Activated CD4-positive, alpha-beta memory T cell treated with anti-CD3 and anti-CD28 coated beads, Interleukin-2, amount 10 ng/mL, durations not matched to agents 7 days and 5 days (primary cell): ENCODE measurements at regions of chr1 and their contacts with region 1.

Region 1: DNA sequence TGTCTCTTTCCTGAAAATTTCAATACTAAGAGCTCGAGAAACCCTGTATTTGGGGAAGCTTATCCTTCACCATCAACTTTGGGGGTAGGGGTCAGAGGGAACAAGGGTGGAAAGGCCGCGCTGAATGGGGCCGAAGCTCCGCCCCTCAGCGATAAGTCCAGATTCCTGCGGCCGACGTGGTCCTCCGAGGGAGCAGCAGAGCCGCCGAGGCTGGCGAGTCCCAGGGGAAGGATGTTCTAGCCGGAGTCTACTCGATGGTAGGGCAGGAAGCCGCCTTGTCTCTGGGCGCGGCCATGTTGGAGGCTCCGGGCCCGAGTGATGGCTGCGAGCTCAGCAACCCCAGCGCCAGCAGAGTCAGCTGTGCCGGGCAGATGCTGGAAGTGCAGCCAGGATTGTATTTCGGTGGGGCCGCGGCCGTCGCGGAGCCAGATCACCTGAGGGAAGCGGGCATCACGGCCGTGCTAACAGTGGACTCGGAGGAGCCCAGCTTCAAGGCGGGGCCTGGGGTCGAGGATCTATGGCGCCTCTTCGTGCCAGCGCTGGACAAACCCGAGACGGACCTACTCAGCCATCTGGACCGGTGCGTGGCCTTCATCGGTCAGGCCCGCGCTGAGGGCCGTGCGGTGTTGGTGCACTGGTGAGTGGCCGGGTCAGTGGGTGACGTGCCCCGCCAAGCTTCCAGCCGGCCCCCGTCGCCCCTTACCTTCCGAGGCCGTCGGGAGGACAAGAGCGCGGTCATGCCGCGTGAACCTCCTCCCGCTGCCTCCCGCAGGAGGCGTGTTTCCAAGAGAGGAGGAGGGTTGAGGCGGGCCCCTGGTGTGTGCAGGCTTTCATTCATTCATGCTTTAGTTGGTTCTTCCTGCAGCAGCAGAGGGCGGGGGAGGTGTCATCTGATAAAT is at the start of gene DUSP12:
- DNase-seq: peak; percentile 89
- H3K4me3 Mint-ChIP-seq: peak within 1 kb of the TSS; percentile 98
- H3K27ac Mint-ChIP-seq: peak within 1 kb of the TSS; percentile 97
- H3K4me1 Mint-ChIP-seq: peaks cover 51% of the 10 kb centered on the region
- H3K27me3 Mint-ChIP-seq: peaks cover 8% of the 10 kb centered on the region
- total RNA-seq, gene DUSP12: 23.4 to 23.5 TPM

Region 2: DNA sequence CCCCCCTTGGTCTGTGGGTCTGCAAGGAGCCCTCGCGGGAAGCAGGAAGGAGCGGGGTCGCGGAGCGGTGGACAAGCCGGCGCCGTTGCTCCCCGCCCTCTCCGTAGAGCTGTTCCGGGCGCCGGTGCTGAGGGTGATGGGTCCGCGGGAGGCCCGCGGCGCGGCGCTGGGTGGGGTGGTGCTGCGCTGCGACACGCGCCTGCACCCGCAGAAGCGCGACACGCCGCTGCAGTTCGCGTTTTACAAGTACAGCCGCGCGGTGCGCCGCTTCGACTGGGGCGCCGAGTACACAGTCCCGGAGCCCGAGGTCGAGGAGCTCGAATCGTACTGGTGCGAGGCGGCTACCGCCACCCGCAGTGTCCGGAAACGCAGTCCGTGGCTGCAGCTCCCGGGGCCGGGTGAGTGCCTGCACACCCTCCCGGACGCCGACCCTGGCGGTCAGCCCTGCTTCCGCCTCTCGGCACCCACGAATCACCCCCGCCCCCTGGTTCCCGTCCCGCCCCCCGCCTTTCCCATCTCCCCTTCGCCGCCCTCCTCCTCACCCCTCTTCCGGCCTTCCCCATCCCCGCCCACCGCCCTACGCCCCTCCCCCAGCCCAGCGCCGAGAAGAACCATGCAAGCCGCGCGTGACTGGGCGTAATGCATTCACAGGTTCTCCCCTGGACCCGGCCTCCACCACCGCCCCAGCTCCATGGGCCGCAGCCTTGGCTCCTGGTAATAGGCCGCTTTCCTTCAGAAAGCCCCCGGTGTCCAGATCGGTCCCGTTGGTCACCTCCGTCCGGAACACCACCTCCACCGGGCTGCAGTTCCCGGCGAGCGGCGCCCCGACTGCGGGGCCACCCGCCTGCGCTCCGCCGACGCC is 22.9 kb before region 1 on chr1:
- CTCF ChIA-PET with region 1: interaction called, 8 read pairs
- POLR2A ChIA-PET with region 1: interaction called, 23 read pairs
- DNase-seq: peak; percentile 74
- H3K4me3 Mint-ChIP-seq: peak overlapping the region; percentile 78
- H3K27ac Mint-ChIP-seq: peak overlapping the region; percentile 44
- H3K4me1 Mint-ChIP-seq: peaks cover 58% of the 10 kb centered on the region
- H3K27me3 Mint-ChIP-seq: peaks cover 66% of the 10 kb centered on the region

Region 3: DNA sequence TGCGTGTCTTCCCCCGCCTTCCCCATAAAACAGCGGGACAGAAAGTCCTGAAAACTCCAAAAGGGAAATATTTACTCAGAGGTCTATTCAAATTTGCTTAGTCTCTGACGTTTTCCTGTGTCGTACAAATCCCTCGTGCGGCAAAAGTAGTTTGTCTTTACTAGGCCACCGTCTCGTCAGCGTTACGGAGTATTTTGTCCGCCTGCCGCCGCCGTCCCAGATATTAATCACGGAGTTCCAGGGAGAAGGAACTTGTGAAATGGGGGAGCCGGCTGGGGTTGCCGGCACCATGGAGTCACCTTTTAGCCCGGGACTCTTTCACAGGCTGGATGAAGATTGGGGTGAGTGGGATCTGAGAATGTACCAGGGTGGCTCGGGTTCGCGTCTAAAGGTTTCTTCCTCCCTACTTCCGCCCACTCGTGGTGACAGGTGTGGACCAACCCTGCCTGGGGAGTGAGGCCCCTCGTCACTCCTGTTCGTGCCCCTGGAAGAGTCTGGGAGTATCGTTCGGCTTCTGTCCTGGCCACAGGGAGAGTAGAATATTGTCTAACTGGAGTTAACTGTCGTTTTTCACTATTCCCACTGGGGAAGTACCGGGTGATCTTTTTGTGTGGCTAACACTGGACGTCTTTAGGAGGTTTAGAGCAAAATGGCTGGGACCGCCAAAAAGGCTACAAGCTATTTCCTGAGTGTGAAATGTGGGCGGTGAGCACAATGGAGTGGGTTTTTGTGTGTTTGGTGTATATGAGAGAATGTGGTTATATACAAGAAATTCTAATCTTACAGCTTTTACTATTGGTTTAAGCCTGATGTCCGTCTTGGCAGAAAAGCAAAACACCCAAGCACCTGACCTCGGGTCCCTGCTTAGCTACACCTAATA is 16.6 kb after region 1 on chr1 and contains the start of gene ATF6:
- CTCF ChIA-PET with region 1: interaction called, 8 read pairs
- POLR2A ChIA-PET with region 1: interaction called, 27 read pairs
- DNase-seq: peak; percentile 85
- H3K4me3 Mint-ChIP-seq: peak within 1 kb of the TSS; percentile 97
- H3K27ac Mint-ChIP-seq: peak within 1 kb of the TSS; percentile 91
- H3K4me1 Mint-ChIP-seq: peaks cover 60% of the 10 kb centered on the region
- H3K27me3 Mint-ChIP-seq: no peaks in the 10 kb centered on the region
- total RNA-seq, gene ATF6: 19.3 TPM